IMR-90 (cell line): ENCODE measurements at regions of chr18 and their contacts with region 1.

Region 1: GRCh38 chr18:74551936-74552555 is 17.7 kb downstream of the CNDP1 start:
- DNase-seq: peak; percentile 78
- ATAC-seq: peak; percentile 100
- H3K4me3 ChIP-seq: no peak overlapping the region
- H3K27ac ChIP-seq: no peak overlapping the region
- H3K4me1 ChIP-seq: no peaks in the 10 kb centered on the region
- H3K27me3 ChIP-seq: peaks cover 18% of the 10 kb centered on the region
- CTCF ChIP-seq: peak; percentile 88
- POLR2A ChIP-seq: no peak
- RAD21 ChIP-seq: peak; percentile 87

Region 2: DNA sequence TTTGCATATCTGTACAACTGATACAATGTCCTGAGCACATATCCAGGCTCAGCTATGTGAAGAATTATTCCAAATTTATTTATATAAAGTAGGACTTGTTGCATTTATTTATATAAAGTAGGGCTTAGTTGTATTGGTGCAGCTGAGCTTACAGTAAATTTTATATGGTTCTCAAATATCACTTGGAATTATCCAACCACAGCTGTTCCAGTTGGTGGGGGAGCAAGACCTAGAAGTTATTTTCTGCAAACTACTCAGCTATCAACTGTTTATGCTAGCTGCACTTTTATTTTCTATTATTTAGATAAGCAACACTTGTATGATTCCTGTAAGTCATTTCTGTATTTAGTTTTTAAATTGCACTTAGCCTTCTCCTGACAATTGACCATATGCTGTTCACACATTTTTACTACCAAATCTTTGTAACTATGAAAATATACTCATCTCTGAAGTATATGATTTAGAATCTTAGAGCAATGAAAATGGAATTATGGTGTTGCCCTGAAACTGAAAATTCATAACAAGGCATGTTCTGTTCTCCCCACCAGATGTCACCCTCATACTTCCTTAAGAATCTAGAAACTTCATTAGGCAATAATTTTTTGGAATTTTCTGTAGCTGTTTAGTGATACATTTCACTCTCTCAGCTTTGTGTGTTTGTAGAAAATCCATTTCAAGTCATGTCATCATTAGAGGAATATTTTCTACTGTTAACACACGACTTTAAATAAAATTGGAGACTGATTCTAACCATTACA is 1850.9 kb before region 1 on chr18:
- CTCF ChIA-PET with region 1: no interaction called
- POLR2A ChIA-PET with region 1: no interaction called
- dilution Hi-C with region 1: no loop called
- in situ Hi-C with region 1: no loop called
- intact Hi-C with region 1: loop called (anchors 5 kb)
- DNase-seq: peak; percentile 14
- ATAC-seq: no peak
- H3K4me3 ChIP-seq: no peak overlapping the region
- H3K27ac ChIP-seq: no peak overlapping the region
- H3K4me1 ChIP-seq: no peaks in the 10 kb centered on the region
- H3K27me3 ChIP-seq: no peaks in the 10 kb centered on the region
- CTCF ChIP-seq: peak; percentile 48
- POLR2A ChIP-seq: no peak
- RAD21 ChIP-seq: peak; percentile 47

Region 3: GRCh38 chr18:74196220-74197119 is 355.6 kb before region 1 on chr18:
- CTCF ChIA-PET with region 1: interaction called, 6 read pairs
- POLR2A ChIA-PET with region 1: no interaction called
- dilution Hi-C with region 1: no loop called
- in situ Hi-C with region 1: loop called (anchors 25 kb)
- intact Hi-C with region 1: loop called (anchors 2 kb)
- DNase-seq: peak; percentile 66
- ATAC-seq: peak; percentile 92
- H3K4me3 ChIP-seq: peak overlapping the region; percentile 24; the same call in 1 of the 2 replicates
- H3K27ac ChIP-seq: no peak overlapping the region
- H3K4me1 ChIP-seq: peaks cover 3% of the 10 kb centered on the region; the same call in 1 of the 2 replicates
- H3K27me3 ChIP-seq: peaks cover 13% of the 10 kb centered on the region
- CTCF ChIP-seq: peak; percentile 87
- POLR2A ChIP-seq: 0 out of 2 replicates have a peak, but pooled peaks have one; percentile 29
- RAD21 ChIP-seq: peak; percentile 91

Region 4: DNA sequence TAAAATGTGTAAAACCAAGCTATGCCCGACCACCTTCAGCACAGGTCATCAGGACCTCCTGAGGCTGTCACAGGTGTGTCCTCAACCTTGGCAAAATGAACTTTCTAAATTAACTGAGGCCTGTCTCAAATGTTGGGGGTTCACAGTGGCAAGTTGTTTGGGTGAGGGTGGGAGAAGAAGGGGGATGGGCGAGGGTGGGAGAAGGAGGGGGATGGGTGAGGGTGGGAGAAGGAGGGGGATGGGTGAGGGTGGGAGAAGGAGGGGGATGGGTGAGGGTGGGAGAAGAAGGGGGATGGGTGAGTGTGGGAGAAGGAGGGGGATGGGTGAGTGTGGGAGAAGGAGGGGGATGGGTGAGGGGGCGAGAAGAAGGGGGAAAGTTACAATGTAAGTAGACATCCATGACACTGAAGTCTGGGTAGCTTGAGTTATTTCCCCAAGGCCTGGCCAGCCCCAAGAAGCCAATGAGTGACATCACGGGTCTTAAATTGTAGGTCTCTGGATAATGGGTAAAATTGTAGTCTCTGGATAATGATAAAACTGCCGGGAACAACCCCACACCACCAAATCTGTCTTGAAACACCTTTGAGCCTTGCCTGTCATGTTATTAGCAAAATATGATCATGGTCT is 347.4 kb before region 1 on chr18:
- CTCF ChIA-PET with region 1: no interaction called
- POLR2A ChIA-PET with region 1: no interaction called
- dilution Hi-C with region 1: no loop called
- in situ Hi-C with region 1: loop called (anchors 25 kb)
- intact Hi-C with region 1: no loop called
- DNase-seq: peak; percentile 4
- ATAC-seq: no peak
- H3K4me3 ChIP-seq: no peak overlapping the region
- H3K27ac ChIP-seq: no peak overlapping the region
- H3K4me1 ChIP-seq: no peaks in the 10 kb centered on the region
- H3K27me3 ChIP-seq: peaks cover 25% of the 10 kb centered on the region
- CTCF ChIP-seq: no peak
- POLR2A ChIP-seq: no peak
- RAD21 ChIP-seq: no peak

Region 5: GRCh38 chr18:74353169-74353775 is 198.8 kb before region 1 on chr18:
- CTCF ChIA-PET with region 1: interaction called, 28 read pairs
- POLR2A ChIA-PET with region 1: no interaction called
- dilution Hi-C with region 1: no loop called
- in situ Hi-C with region 1: loop called (anchors 5 kb)
- intact Hi-C with region 1: loop called (anchors 1 kb)
- DNase-seq: peak; percentile 74
- ATAC-seq: peak; percentile 97
- H3K4me3 ChIP-seq: no peak overlapping the region
- H3K27ac ChIP-seq: no peak overlapping the region
- H3K4me1 ChIP-seq: peaks cover 2% of the 10 kb centered on the region
- H3K27me3 ChIP-seq: peaks cover 9% of the 10 kb centered on the region
- CTCF ChIP-seq: peak; percentile 69
- POLR2A ChIP-seq: no peak
- RAD21 ChIP-seq: peak; percentile 72

Region 6: DNA sequence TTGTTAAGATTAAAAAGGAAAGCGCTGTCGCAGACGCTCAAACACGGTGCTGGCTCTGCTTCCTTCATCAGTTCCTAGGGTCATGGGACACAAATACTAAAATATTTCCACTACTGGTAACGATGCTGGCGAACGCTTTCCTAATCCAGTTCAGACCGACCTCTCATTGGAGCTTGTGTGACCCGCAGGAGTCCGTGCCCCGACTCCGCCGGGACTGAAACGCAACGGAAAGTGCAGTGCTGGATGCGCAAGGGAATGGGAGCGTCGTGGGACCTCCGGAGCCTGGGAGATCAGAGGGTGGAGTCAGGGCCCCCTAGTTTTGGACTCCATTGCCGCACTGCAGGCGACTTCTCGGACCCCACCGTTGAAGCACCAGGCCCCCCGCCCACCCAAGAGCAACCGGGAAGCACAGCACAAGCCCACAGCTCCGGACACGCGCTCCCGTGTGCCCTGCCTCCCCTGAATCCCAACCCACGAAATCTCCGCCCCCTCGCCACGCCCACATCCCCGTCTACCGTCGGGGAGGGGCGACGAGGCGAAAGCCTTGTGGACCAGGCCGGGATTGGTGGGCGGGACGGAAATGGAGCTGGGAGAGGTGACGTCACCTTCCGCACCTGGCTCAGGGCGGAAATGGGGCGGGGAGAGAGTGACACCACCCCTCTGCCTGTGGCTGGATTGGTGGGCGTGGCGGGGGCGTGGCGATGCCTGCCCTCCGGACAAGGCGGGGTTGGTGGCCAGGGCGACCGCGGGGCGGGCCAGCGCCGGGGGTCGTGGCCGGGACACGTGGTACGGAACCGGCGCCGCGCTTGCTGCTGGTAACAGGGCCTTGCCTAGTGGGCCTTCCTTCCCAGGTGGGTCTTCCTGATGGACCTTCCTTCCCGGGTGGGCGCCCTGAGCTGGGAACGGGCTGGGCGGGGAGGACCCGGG is 56.2 kb before region 1 on chr18 and contains the start of gene CNDP2:
- CTCF ChIA-PET with region 1: interaction called, 4 read pairs
- POLR2A ChIA-PET with region 1: interaction called, 10 read pairs
- dilution Hi-C with region 1: no loop called
- in situ Hi-C with region 1: no loop called
- intact Hi-C with region 1: loop called (anchors 5 kb)
- DNase-seq: peak; percentile 98
- ATAC-seq: peak; percentile 94
- H3K4me3 ChIP-seq: peak within 1 kb of the TSS; percentile 79
- H3K27ac ChIP-seq: peak within 1 kb of the TSS; percentile 61
- H3K4me1 ChIP-seq: peaks cover 5% of the 10 kb centered on the region; the same call in 1 of the 2 replicates
- H3K27me3 ChIP-seq: peaks cover 2% of the 10 kb centered on the region; the same call in 1 of the 2 replicates
- CTCF ChIP-seq: no peak
- POLR2A ChIP-seq: peak; percentile 64; the same call in 1 of the 2 replicates
- RAD21 ChIP-seq: no peak
- total RNA-seq, gene CNDP2: 52.0 and 52.2 TPM in 2 replicates